ENCODE measurements at regions of chr9 and their contacts with region 1.

Region 1: GRCh38 chr9:6984941-6985578 is 227.3 kb downstream of the KDM4C start:
- DNase-seq: no peak
- ATAC-seq: no peak
- H3K4me3 ChIP-seq: no peak overlapping the region
- H3K27ac ChIP-seq: no peak overlapping the region
- H3K4me1 ChIP-seq: no peaks in the 10 kb centered on the region
- H3K27me3 ChIP-seq: no peaks in the 10 kb centered on the region
- CTCF ChIP-seq: no peak
- POLR2A ChIP-seq: no peak
- RAD21 ChIP-seq: no peak

Region 2: GRCh38 chr9:6911901-6912638 is 73.0 kb before region 1 on chr9:
- CTCF ChIA-PET with region 1: no interaction called
- POLR2A ChIA-PET with region 1: no interaction called
- dilution Hi-C with region 1: no loop called
- in situ Hi-C with region 1: no loop called
- intact Hi-C with region 1: no loop called
- DNase-seq: peak; percentile 14
- ATAC-seq: peak; percentile 53
- H3K4me3 ChIP-seq: no peak overlapping the region
- H3K27ac ChIP-seq: no peak overlapping the region
- H3K4me1 ChIP-seq: no peaks in the 10 kb centered on the region
- H3K27me3 ChIP-seq: no peaks in the 10 kb centered on the region
- CTCF ChIP-seq: no peak
- POLR2A ChIP-seq: no peak
- RAD21 ChIP-seq: no peak

Region 3: DNA sequence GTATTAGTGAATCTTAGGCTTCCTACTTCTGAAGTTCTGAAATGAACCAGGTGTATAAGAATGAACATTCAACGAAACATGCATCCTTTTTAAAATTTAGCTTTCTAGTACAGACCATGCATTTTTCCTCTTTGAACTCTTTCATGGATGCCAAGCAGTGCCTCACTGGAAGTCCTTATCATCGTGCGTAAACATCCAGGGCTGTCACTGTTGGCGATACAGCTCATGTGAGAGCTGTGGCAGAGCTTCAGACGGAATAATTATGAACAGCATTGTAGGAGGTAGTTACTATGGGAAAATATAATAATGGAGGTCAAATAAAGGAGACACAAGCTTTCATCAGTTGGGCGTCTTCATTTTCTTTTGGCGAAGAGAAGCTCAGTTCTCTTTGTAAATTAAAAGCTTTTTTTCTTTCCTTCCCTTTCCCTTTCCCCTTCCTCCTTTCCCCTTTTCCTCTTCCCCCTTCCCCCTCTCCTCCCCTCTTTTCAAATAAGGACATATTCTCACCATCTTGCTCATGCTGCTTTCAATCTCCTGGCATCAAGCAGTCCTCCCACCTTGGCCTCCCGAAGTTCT is 60.0 kb before region 1 on chr9:
- CTCF ChIA-PET with region 1: no interaction called
- POLR2A ChIA-PET with region 1: no interaction called
- dilution Hi-C with region 1: no loop called
- in situ Hi-C with region 1: loop called (anchors 10 kb)
- intact Hi-C with region 1: no loop called
- DNase-seq: no peak
- ATAC-seq: no peak
- H3K4me3 ChIP-seq: no peak overlapping the region
- H3K27ac ChIP-seq: no peak overlapping the region
- H3K4me1 ChIP-seq: peaks cover 1% of the 10 kb centered on the region; the same call in 1 of the 2 replicates
- H3K27me3 ChIP-seq: no peaks in the 10 kb centered on the region
- CTCF ChIP-seq: no peak
- POLR2A ChIP-seq: no peak
- RAD21 ChIP-seq: no peak

Region 4: DNA sequence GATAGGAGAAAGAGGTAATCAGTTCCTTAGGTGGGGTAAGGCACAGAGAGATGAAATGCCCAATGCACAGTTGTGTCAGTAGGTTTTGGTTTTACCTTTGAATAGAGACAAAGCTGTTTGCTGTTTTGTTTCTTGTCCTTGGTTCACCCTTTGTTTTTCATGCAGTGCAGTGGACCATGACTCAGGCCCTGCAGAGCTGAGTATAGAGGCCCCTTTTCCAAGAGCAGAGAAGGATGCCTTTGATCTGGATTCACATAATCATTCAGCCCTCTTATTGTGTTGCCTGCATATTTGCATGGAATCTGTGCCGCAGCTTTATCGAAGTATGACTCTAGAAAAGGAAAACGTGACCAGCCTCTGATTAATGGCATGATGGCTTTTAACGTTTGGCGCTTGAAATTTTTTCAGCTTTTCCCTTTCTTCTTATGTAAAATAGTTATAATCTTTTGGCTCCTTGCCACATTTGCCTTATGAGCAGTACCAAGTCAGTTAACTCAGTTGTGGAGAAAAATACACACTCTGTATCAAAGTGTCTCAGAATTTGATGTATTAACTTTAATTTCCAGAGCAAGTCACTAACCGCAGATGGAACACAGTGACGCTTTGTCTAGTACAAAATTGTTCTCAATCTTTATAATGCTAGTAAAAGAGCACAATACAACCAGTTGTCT is 29.7 kb before region 1 on chr9:
- CTCF ChIA-PET with region 1: no interaction called
- POLR2A ChIA-PET with region 1: no interaction called
- dilution Hi-C with region 1: no loop called
- in situ Hi-C with region 1: no loop called
- intact Hi-C with region 1: loop called (anchors 5 kb)
- DNase-seq: peak; percentile 77
- ATAC-seq: peak; percentile 85
- H3K4me3 ChIP-seq: no peak overlapping the region
- H3K27ac ChIP-seq: no peak overlapping the region
- H3K4me1 ChIP-seq: peaks cover 2% of the 10 kb centered on the region; the same call in 1 of the 2 replicates
- H3K27me3 ChIP-seq: no peaks in the 10 kb centered on the region
- CTCF ChIP-seq: no peak
- POLR2A ChIP-seq: no peak
- RAD21 ChIP-seq: no peak

Measured in IMR-90 (cell line).